ENCODE measurements at regions of chr2 and their contacts with region 1.

Region 1: GRCh38 chr2:62195421-62196277 is at the start of gene B3GNT2:
- H3K4me3 Mint-ChIP-seq: peak within 1 kb of the TSS; percentile 95
- H3K27ac Mint-ChIP-seq: peak within 1 kb of the TSS; percentile 93
- H3K4me1 Mint-ChIP-seq: peaks cover 49% of the 10 kb centered on the region
- H3K27me3 Mint-ChIP-seq: no peaks in the 10 kb centered on the region

Region 2: DNA sequence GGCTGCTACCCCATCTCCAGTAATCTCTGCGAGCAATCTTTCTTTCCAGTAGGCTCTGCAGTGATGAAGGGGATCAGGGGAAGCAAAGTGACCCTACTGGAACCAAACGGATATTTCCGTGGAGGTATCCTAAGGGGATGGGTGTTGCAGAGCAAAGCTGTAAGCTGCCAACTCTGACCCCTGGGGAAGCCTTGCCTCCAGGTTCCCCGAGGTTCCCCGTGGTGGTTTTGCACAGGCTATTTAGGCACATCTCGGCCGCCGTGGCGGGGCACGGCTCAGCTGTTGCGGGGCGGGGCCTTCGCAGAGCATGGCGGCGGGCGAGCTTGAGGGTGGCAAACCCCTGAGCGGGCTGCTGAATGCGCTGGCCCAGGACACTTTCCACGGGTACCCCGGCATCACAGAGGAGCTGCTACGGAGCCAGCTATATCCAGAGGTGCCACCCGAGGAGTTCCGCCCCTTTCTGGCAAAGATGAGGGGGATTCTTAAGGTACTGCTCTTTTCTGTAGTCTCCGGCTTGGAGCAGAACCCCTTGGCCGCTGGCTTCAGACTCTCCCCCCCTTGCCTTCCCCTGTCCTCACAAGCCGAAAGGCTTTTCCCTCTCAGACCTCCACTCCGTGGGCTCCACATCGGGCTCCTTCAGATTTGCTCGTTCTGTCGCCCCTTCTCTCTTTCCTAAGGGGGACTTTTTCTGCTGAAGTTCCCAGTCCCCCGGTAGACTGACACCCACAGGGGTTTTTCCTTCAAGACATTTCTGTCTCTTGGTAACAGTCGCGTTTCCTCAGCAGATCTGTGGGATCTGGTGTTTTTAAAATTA is 290.1 kb before region 1 on chr2 and contains the start of gene COMMD1:
- intact Hi-C with region 1: loop called (anchors 10 kb)
- H3K4me3 Mint-ChIP-seq: peak within 1 kb of the TSS; percentile 100
- H3K27ac Mint-ChIP-seq: peak within 1 kb of the TSS; percentile 94
- H3K4me1 Mint-ChIP-seq: peaks cover 7% of the 10 kb centered on the region
- H3K27me3 Mint-ChIP-seq: no peaks in the 10 kb centered on the region

Region 3: GRCh38 chr2:62287899-62288880 is 92.5 kb after region 1 on chr2:
- intact Hi-C with region 1: loop called (anchors 10 kb)
- H3K4me3 Mint-ChIP-seq: no peak overlapping the region
- H3K27ac Mint-ChIP-seq: peak overlapping the region; percentile 71
- H3K4me1 Mint-ChIP-seq: peaks cover 27% of the 10 kb centered on the region
- H3K27me3 Mint-ChIP-seq: no peaks in the 10 kb centered on the region

Region 4: GRCh38 chr2:62415019-62415431 is 219.4 kb after region 1 on chr2:
- intact Hi-C with region 1: loop called (anchors 10 kb)
- H3K4me3 Mint-ChIP-seq: no peak overlapping the region
- H3K27ac Mint-ChIP-seq: no peak overlapping the region
- H3K4me1 Mint-ChIP-seq: peaks cover 30% of the 10 kb centered on the region
- H3K27me3 Mint-ChIP-seq: no peaks in the 10 kb centered on the region

Region 5: GRCh38 chr2:62705007-62705829 is 509.6 kb after region 1 on chr2 and contains the start of gene EHBP1:
- intact Hi-C with region 1: loop called (anchors 5 kb)
- H3K4me3 Mint-ChIP-seq: peak within 1 kb of the TSS; percentile 93
- H3K27ac Mint-ChIP-seq: peak within 1 kb of the TSS; percentile 96
- H3K4me1 Mint-ChIP-seq: peaks cover 31% of the 10 kb centered on the region
- H3K27me3 Mint-ChIP-seq: peaks cover 2% of the 10 kb centered on the region

Measured in dendritic cell treated with granulocyte-macrophage colony-stimulating factor and Interleukin-4, amounts not matched to agents 40 ng/mL and 50 ng/mL, for 4 days (primary cell).